CD8-positive, alpha-beta memory T cell (primary cell): ENCODE measurements at regions of chr13 and their contacts with region 1.

Region 1: DNA sequence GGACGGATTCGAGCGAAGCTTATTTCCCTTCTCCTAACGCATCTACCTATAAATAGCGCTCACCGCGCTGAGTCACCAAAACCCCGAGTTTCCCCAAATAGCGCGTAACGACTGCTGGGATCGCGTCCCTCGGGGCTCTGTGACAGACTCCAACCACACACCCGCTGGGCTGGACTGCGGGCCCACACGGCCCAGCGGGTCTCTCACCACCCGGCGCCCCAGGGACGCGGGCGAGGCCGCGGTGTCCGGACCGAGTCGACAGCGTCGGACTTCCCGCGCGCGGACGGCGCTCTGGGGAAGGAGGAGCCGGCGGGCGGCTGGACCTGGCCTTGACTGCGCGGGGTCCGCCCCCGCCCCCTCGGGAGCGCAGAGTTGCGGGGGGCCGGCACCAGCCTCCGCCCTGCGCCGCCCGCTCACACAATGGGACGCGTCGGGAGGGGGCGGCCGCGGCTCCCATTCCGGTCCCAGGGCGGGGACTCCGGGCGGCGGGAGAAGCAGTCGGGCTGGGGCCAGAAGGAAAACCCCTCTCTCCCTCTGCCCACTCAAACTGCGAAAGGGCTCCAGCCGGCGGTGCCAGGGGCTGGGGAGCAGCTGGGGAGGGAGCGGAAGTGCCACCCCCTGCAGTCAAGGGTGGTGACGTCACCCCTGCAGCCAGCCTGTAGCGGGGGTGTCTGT is 108.8 kb downstream of the KCNRG start:
- DNase-seq: peak; percentile 62 to 85 (median 75)
- H3K4me3 ChIP-seq: peak overlapping the region; percentile 77
- H3K4me3 Mint-ChIP-seq: peak overlapping the region; percentile 89 to 94 (median 92)
- H3K27ac ChIP-seq: peak overlapping the region; percentile 95
- H3K27ac Mint-ChIP-seq: peak overlapping the region; percentile 95 to 99 (median 98)
- H3K4me1 ChIP-seq: peaks cover 46% of the 10 kb centered on the region
- H3K4me1 Mint-ChIP-seq: peaks cover 48 to 70% (median 65%) of the 10 kb centered on the region in 3 donors
- H3K27me3 ChIP-seq: peaks cover 7% of the 10 kb centered on the region
- H3K27me3 Mint-ChIP-seq: peaks cover 16 to 20% of the 10 kb centered on the region in 2 donors

Region 2: GRCh38 chr13:49996951-49997895 is 126.8 kb before region 1 on chr13 and contains the start of gene TRIM13:
- CTCF ChIA-PET with region 1: interaction called, 47 read pairs
- POLR2A ChIA-PET with region 1: interaction called, 62 read pairs
- DNase-seq: peak; percentile 62 to 86 (median 78)
- H3K4me3 ChIP-seq: peak within 1 kb of the TSS; percentile 92
- H3K4me3 Mint-ChIP-seq: peak within 1 kb of the TSS; percentile 84 to 96 (median 89)
- H3K27ac ChIP-seq: peak within 1 kb of the TSS; percentile 88
- H3K27ac Mint-ChIP-seq: peak within 1 kb of the TSS; percentile 84 to 96 (median 91)
- H3K4me1 ChIP-seq: peaks cover 36% of the 10 kb centered on the region
- H3K4me1 Mint-ChIP-seq: peaks cover 39 to 58% (median 56%) of the 10 kb centered on the region in 3 donors
- H3K27me3 ChIP-seq: no peaks in the 10 kb centered on the region
- H3K27me3 Mint-ChIP-seq: peaks cover 0 to 2% of the 10 kb centered on the region in 2 donors
- total RNA-seq, gene TRIM13: 16.5 to 17.1 TPM

Region 3: GRCh38 chr13:50101590-50101989 is 22.4 kb before region 1 on chr13:
- CTCF ChIA-PET with region 1: interaction called, 5 read pairs
- POLR2A ChIA-PET with region 1: interaction called, 16 read pairs
- DNase-seq: no peak
- H3K4me3 ChIP-seq: no peak overlapping the region
- H3K4me3 Mint-ChIP-seq: no peak overlapping the region
- H3K27ac ChIP-seq: no peak overlapping the region
- H3K27ac Mint-ChIP-seq: peak overlapping the region in 2 of 8 donors; percentile 42 to 43
- H3K4me1 ChIP-seq: peaks cover 10% of the 10 kb centered on the region
- H3K4me1 Mint-ChIP-seq: peaks cover 45 to 67% (median 60%) of the 10 kb centered on the region in 3 donors
- H3K27me3 ChIP-seq: no peaks in the 10 kb centered on the region
- H3K27me3 Mint-ChIP-seq: no peaks in the 10 kb centered on the region

Region 4: GRCh38 chr13:50387051-50387581 is 263.1 kb after region 1 on chr13:
- CTCF ChIA-PET with region 1: interaction called, 15 read pairs
- POLR2A ChIA-PET with region 1: interaction called, 3 read pairs
- DNase-seq: peak in 4 of 5 donors; percentile 2 to 72 (median 10)
- H3K4me3 ChIP-seq: no peak overlapping the region
- H3K4me3 Mint-ChIP-seq: peak overlapping the region in 2 of 7 donors; percentile 39 to 44
- H3K27ac ChIP-seq: no peak overlapping the region
- H3K27ac Mint-ChIP-seq: no peak overlapping the region
- H3K4me1 ChIP-seq: no peaks in the 10 kb centered on the region
- H3K4me1 Mint-ChIP-seq: peaks cover 19 to 35% (median 32%) of the 10 kb centered on the region in 3 donors
- H3K27me3 ChIP-seq: no peaks in the 10 kb centered on the region
- H3K27me3 Mint-ChIP-seq: no peaks in the 10 kb centered on the region

Region 5: DNA sequence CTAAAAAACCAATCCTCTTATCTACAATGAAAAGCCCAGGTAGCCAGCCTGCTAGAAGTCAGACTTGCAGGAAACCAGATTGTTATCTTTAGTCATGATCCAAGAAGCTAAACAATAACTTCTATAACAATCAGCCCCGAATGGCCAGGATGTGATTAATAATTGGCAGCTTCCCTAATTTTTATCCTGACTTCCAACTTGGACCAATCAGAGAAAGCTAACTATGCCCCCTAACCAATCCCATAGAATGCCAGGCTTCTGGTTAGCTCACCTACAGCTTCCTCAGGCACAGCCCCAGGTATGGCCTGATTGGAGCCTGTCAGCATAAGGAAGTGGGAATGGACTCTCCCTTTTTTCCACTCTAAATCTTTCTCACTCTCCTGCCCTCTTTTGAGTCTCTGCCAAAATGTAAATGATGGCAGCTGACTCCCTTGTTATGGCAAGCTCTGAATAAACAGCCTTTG is 324.6 kb after region 1 on chr13:
- CTCF ChIA-PET with region 1: no interaction called
- POLR2A ChIA-PET with region 1: no interaction called
- DNase-seq: no peak
- H3K4me3 ChIP-seq: no peak overlapping the region
- H3K4me3 Mint-ChIP-seq: no peak overlapping the region
- H3K27ac ChIP-seq: no peak overlapping the region
- H3K27ac Mint-ChIP-seq: no peak overlapping the region
- H3K4me1 ChIP-seq: no peaks in the 10 kb centered on the region
- H3K4me1 Mint-ChIP-seq: peaks cover 6 to 17% (median 10%) of the 10 kb centered on the region in 3 donors
- H3K27me3 ChIP-seq: no peaks in the 10 kb centered on the region
- H3K27me3 Mint-ChIP-seq: peaks cover 0 to 4% of the 10 kb centered on the region in 2 donors

Region 6: GRCh38 chr13:50893211-50893852 is 769.3 kb after region 1 on chr13:
- CTCF ChIA-PET with region 1: interaction called, 3 read pairs
- POLR2A ChIA-PET with region 1: interaction called, 15 read pairs
- DNase-seq: peak in 3 of 5 donors; percentile 49 to 62 (median 62)
- H3K4me3 ChIP-seq: peak overlapping the region; percentile 15
- H3K4me3 Mint-ChIP-seq: peak overlapping the region; percentile 70 to 88 (median 81)
- H3K27ac ChIP-seq: peak overlapping the region; percentile 45
- H3K27ac Mint-ChIP-seq: peak overlapping the region; percentile 69 to 96 (median 94)
- H3K4me1 ChIP-seq: peaks cover 34% of the 10 kb centered on the region
- H3K4me1 Mint-ChIP-seq: peaks cover 36 to 43% (median 41%) of the 10 kb centered on the region in 3 donors
- H3K27me3 ChIP-seq: no peaks in the 10 kb centered on the region
- H3K27me3 Mint-ChIP-seq: no peaks in the 10 kb centered on the region